Left colon (tissue), 2 donors: ENCODE measurements at regions of chr3 and their contacts with region 1.

Region 1: DNA sequence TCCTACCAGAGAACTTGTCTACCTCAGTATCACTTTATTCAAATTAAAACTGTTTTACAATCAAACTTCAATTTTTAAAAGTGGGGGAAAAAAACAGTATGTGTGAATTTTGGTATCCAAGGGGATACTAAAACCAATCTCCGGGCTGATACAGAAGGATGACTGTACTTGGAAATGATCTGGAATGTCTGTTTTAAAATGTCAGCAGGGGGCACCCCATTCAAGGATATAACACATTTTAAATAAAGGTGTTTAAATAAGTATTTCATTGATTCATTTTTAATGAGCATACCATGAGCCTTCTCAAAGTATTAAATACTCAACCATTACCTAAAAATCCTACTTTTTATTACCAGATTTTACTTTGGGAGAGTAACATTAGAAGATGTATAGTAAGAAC is 67.9 kb downstream of the ULK4 start:
- DNase-seq: no peak
- ATAC-seq: peak; percentile 50

Region 2: DNA sequence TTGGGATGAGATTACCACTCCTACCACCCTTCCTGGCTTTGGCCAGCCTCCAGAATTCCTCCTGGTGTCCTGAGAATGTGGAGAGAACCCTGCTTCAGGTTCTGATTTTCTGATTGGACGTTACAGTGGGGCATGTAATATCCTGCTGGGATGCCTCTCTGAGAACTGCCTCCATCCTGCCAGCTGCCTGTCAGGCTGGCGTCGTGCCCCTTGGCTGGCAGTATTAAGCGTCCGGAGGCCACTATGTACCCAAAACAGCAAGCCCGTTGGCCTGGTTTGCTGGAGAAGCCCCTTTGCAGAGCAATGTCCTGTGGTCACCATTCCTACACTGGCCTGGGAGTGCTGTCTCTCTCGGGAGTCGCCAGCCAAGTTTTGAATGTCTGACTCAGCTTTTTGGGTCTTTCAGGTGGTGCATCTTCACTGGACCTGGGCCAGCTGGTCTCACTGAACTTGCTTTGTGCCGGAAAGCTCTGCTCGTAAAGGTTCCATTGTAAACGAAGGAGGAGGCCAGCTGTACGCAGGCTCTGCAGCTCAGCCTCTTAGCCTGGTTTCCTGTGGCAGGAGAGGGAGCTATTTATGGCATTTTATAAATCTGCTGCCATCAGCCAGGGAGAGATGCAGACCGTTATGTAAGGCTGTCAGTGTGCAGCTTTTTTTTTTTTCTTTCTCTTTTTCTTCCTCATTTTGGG is 178.1 kb after region 1 on chr3:
- intact Hi-C with region 1: no loop called
- DNase-seq: peak; percentile 76 to 86
- ATAC-seq: peak; percentile 63

Region 3: DNA sequence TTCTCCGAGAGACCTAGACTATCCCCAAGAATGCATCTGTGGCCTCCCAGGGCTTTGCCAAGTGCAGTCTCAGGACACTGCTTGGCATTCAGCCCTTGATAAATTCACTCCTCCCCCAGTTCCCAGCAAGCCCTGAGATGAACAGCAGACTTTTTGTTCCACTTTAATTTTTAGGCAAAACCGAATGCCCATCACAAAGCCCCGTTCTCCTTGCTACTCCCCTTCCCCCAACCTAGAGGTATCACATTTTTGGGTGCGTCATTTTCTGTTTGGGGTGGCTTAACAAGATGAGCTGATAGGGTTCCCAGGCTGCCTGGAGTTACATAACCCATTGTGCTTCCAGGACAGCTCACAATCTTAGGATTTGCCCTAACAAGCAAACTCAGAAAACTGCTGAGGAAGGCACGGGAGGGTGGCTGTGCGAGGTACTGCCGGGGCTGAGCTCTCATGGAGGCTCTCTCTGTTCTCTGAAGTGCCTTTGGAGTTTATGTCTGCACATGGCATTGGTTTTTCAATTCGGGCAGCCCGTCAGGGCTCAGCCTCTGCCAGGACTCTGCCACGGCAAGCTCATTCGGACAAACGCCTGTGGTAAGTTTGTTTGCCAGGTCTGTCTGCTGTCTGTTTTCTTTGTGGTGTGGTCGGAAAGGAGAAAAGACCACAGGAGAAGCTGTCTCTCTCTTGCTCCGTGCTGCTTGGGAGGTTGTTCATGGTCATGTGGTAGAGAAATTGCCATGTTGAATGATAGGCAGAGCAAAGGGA is 197.2 kb after region 1 on chr3 and contains the start of gene TRAK1:
- intact Hi-C with region 1: loop called (anchors 5 to 10 kb)
- DNase-seq: no peak
- ATAC-seq: no peak
- total RNA-seq, gene TRAK1: 81.2 to 91.6 TPM

Region 4: GRCh38 chr3:42096796-42097565 is 203.0 kb after region 1 on chr3:
- intact Hi-C with region 1: loop called (anchors 5 to 10 kb)
- DNase-seq: no peak
- ATAC-seq: no peak

Region 5: DNA sequence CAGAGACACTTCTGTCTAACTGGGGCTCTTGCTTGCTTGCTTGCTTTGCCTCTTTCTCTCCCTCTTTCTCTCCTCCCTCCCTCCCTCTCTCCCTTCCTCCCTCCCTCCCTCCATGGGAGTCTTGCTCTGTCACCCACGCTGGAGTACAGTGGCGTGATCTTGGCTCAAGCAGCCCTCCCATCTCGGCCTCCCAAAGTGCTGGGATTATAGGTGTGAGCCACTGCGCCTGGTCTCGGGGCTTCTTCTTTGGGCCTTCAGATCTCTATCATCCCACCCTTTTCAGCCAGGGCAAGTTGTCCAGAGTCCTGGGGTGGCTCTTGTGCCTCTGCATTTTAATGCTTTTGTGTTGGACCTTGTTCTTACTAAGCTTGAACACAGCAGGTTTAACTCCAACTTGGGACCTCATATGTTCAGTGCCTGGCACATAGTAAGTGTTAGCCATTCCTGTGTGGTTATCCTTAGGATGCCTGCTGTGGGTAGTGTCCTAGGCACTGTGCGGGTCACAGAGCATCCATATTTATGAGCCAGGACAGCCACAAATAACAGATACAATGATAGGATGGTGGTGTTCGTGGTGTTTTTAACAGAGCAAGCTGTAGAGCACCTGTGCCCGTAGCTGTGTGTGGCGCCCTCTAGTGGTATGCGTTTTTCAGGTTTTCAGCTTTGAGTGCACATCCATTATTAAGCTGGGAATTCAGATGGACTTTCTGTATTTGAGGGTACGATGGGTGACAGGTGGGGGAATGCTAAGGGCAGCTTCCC is 296.9 kb after region 1 on chr3:
- intact Hi-C with region 1: loop called in 1 of 2 experiments (anchors 5 kb)
- DNase-seq: peak in 1 of 2 donors; percentile 85
- ATAC-seq: peak; percentile 82